PC-9 (cell line): ENCODE measurements at regions of chr14 and their contacts with region 1.

Region 1: GRCh38 chr14:69242311-69243224 is 17.4 kb upstream of the GALNT16 start:
- DNase-seq: peak in 1 of 2 experiments; percentile 47
- H3K4me3 ChIP-seq: no peak overlapping the region
- H3K27ac ChIP-seq: no peak overlapping the region
- H3K4me1 ChIP-seq: no peaks in the 10 kb centered on the region
- H3K27me3 ChIP-seq: no peaks in the 10 kb centered on the region
- CTCF ChIP-seq: peak; percentile 94

Region 2: DNA sequence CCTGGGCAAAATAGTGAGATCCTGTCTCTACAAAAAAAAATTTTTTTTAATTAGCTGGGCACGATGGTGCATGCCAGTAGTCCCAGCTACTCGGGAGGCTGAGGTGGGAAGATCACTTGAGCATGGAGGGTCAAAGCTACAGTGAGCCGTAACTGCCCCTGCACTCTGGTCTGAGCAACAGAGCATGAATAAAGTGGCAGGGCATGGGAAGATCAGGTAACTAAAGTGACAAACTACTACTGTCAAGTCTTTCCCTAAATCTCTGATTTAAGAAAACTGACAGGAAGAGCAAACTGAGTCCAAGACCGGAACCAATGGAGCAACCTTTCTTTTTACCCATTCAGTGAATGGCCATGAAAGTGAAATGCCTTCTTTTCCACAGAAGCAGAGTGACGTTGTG is 100.5 kb before region 1 on chr14:
- CTCF ChIA-PET with region 1: no interaction called
- POLR2A ChIA-PET with region 1: no interaction called
- intact Hi-C with region 1: no loop called
- DNase-seq: no peak
- H3K4me3 ChIP-seq: no peak overlapping the region
- H3K27ac ChIP-seq: no peak overlapping the region
- H3K4me1 ChIP-seq: no peaks in the 10 kb centered on the region
- H3K27me3 ChIP-seq: no peaks in the 10 kb centered on the region
- CTCF ChIP-seq: no peak

Region 3: DNA sequence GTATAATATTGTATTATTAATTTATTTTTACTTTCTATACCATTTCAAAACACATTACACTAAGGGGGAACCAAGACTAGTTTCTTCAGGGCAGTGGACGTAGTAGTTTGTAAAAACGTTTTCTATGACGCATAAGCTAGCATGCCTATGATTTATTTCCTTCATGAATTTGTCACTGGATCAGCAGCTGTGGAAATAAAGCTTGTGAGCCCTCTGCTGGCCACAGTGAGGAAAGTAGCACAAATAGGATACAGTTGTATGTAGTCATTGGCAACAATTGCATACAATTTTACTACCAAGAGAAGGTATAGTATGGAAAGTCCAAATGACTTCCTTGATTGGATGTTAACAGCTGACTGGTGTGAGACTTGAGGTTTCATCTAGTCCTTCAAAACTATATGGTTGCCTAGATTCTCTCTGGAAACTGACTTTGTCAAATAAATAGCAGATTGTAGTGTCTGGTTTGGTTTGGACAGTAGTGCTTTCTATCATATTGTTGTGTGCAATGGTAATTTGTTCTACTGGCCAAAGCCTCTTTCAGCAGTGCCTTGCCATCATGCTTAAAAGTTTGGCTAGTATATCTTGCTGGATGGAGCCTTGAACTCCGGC is 217.6 kb after region 1 on chr14:
- CTCF ChIA-PET with region 1: interaction called, 6 read pairs
- POLR2A ChIA-PET with region 1: no interaction called
- intact Hi-C with region 1: loop called (anchors 1 kb)
- DNase-seq: peak; percentile 69 to 82
- H3K4me3 ChIP-seq: no peak overlapping the region
- H3K27ac ChIP-seq: no peak overlapping the region
- H3K4me1 ChIP-seq: no peaks in the 10 kb centered on the region
- H3K27me3 ChIP-seq: no peaks in the 10 kb centered on the region
- CTCF ChIP-seq: peak; percentile 91